CD4-positive, alpha-beta T cell (primary cell): ENCODE measurements at regions of chr2 and their contacts with region 1.

Region 1: GRCh38 chr2:126600742-126601141 is 55.2 kb upstream of the GYPC start:
- DNase-seq: no peak
- ATAC-seq: no peak
- H3K4me3 ChIP-seq: no peak overlapping the region
- H3K4me3 Mint-ChIP-seq: no peak overlapping the region
- H3K27ac ChIP-seq: no peak overlapping the region
- H3K27ac Mint-ChIP-seq: no peak overlapping the region
- H3K4me1 ChIP-seq: no peaks in the 10 kb centered on the region
- H3K4me1 Mint-ChIP-seq: no peaks in the 10 kb centered on the region
- H3K27me3 ChIP-seq: peaks cover 0 to 4% of the 10 kb centered on the region in 2 experiments
- H3K27me3 Mint-ChIP-seq: no peaks in the 10 kb centered on the region
- CTCF ChIP-seq: no peak

Region 2: GRCh38 chr2:126971481-126972278 is 370.9 kb after region 1 on chr2:
- CTCF ChIA-PET with region 1: no interaction called
- POLR2A ChIA-PET with region 1: no interaction called
- intact Hi-C with region 1: loop called in 1 of 2 experiments (anchors 10 kb)
- DNase-seq: peak; percentile 45 to 79 (median 54)
- ATAC-seq: peak; percentile 94
- H3K4me3 ChIP-seq: peak overlapping the region; percentile 43
- H3K4me3 Mint-ChIP-seq: peak overlapping the region; percentile 74
- H3K27ac ChIP-seq: no peak overlapping the region
- H3K27ac Mint-ChIP-seq: no peak overlapping the region
- H3K4me1 ChIP-seq: peaks cover 14% of the 10 kb centered on the region
- H3K4me1 Mint-ChIP-seq: no peaks in the 10 kb centered on the region
- H3K27me3 ChIP-seq: peaks cover 21 to 53% of the 10 kb centered on the region in 2 experiments
- H3K27me3 Mint-ChIP-seq: peaks cover 54% of the 10 kb centered on the region
- CTCF ChIP-seq: peak; percentile 92